ENCODE measurements at regions of chr16 and their contacts with region 1.

Region 1: DNA sequence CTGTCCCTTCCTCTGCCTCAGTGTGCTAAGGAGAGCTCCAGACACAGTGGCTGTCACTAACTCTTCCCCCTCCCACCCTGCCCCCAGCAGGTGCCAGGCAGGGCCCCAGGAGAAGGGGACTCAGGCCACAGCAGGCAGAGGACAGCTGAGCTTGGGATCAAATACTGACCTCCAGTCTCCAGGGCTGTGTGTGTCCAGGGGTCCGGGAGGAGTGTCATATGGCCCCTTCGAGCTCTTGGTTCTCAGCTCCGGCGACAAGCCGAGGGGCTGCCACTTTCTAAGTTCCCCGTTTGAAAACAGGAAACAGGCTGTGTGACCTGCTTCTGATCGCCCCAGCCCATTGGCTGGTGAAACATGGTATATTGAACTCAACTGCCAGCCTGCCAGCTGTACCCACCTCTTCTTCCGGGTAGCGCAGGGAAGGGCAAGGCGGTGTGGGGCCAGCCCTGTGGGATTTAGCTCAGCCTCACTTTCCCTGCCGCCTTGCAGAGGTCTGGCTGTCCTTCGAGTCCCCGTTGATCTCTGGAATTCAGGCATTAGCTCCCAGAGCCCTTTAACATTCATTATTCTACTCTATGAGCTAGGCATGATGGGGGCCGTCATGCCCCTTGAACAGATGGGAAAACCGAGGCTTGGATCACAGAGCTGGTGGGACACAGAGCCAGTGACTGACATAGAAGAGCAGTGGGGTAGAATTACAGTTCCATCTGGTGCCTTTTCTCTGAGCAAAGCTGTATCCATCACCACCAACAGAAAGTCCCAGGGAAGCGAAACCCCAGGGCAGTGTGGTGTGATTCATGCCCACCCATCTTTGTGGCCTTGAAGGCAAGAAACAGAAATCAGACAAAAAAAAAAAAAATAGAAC is at the start of gene SNX20:
- DNase-seq: peak; percentile 78
- H3K4me3 Mint-ChIP-seq: peak within 1 kb of the TSS; percentile 91
- H3K27ac Mint-ChIP-seq: peak within 1 kb of the TSS; percentile 86
- H3K4me1 Mint-ChIP-seq: peaks cover 91% of the 10 kb centered on the region
- H3K27me3 Mint-ChIP-seq: no peaks in the 10 kb centered on the region
- total RNA-seq, gene SNX20: 94.7 to 97.7 TPM

Region 2: GRCh38 chr16:50573947-50574744 is 107.1 kb before region 1 on chr16:
- CTCF ChIA-PET with region 1: no interaction called
- POLR2A ChIA-PET with region 1: no interaction called
- DNase-seq: no peak
- H3K4me3 Mint-ChIP-seq: no peak overlapping the region
- H3K27ac Mint-ChIP-seq: no peak overlapping the region
- H3K4me1 Mint-ChIP-seq: no peaks in the 10 kb centered on the region
- H3K27me3 Mint-ChIP-seq: no peaks in the 10 kb centered on the region

Region 3: DNA sequence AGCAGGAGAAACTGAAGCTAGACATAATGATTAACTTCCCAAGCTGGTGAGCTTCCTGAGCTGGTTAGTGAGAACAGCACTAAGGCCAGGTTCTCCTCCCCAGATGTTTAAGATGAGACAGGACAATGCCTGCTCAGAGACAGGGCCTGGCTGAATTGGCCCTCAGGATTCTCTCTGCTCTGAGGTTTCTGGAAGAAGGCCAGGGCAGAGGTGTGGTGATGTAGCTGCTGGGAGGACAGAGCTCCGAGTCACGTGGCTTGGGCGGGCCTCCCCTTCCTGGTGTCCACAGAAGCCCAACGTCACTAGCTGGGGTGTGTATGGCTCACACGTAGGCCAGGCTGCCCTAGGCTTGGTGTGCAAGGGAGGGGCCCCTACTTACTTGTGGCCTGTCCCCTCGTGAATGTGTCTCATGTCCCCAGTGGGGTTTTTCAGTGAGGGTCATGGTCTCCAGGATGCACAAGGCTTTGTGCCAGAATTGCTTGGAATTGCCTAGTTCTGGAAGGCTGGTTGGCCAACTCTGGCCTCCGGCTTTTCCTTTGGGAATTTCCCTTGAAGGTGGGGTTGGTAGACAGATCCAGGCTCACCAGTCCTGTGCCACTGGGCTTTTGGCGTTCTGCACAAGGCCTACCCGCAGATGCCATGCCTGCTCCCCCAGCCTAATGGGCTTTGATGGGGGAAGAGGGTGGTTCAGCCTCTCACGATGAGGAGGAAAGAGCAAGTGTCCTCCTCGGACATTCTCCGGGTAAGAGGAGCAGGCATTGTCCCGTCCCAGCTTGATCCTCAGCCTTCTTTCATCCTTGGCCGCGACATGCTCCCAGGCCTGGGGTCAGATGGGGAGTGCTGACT is 15.5 kb after region 1 on chr16:
- CTCF ChIA-PET with region 1: interaction called, 5 read pairs
- POLR2A ChIA-PET with region 1: interaction called, 164 read pairs
- DNase-seq: peak; percentile 84
- H3K4me3 Mint-ChIP-seq: peak overlapping the region; percentile 87
- H3K27ac Mint-ChIP-seq: peak overlapping the region; percentile 81
- H3K4me1 Mint-ChIP-seq: peaks cover 84% of the 10 kb centered on the region
- H3K27me3 Mint-ChIP-seq: peaks cover 3% of the 10 kb centered on the region

Region 4: GRCh38 chr16:50709053-50709684 is 27.9 kb after region 1 on chr16:
- CTCF ChIA-PET with region 1: interaction called, 3 read pairs
- POLR2A ChIA-PET with region 1: interaction called, 10 read pairs
- DNase-seq: no peak
- H3K4me3 Mint-ChIP-seq: peak overlapping the region; percentile 28
- H3K27ac Mint-ChIP-seq: peak overlapping the region; percentile 75
- H3K4me1 Mint-ChIP-seq: peaks cover 54% of the 10 kb centered on the region
- H3K27me3 Mint-ChIP-seq: no peaks in the 10 kb centered on the region

Region 5: GRCh38 chr16:50741808-50742575 is 60.7 kb after region 1 on chr16 and contains the start of gene CYLD:
- CTCF ChIA-PET with region 1: interaction called, 13 read pairs
- POLR2A ChIA-PET with region 1: interaction called, 118 read pairs
- DNase-seq: peak; percentile 100
- H3K4me3 Mint-ChIP-seq: peak within 1 kb of the TSS; percentile 94
- H3K27ac Mint-ChIP-seq: peak within 1 kb of the TSS; percentile 94
- H3K4me1 Mint-ChIP-seq: peaks cover 39% of the 10 kb centered on the region
- H3K27me3 Mint-ChIP-seq: no peaks in the 10 kb centered on the region
- total RNA-seq, gene CYLD: 235 to 254 TPM

Region 6: DNA sequence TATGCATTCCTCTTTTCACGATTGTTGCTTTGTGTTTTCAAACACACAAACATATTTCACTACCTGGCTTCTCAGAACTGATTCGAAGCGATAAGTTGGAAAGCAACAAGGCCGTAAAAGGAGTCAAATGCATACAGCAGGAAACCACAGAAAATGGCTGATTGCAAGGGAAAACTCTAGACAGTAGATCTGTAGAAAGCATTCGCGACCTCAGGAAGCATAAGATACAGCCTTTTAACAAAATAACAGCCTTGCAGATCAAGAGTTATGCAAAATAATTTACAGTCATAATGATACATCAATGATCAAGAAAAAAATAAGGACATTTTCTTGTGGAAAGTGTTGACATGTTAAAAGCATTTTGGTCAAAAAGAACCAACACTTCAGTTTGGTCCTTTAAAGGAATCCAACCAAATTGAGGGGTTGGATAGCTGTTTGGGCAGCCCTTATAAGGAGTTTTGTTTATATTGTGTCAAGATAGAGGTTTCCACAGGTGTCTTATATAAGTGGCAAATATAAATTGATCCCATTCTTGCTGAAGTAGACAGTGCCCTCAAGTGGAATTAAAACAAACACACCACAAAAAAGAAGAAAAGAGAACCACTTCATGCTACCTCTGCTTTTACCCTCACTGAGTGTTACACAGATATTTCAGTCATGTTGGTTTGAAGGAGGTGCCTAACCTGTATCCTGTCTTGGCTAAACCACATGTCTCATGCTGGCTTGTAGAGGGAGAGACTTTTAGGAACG is 66.1 kb after region 1 on chr16:
- CTCF ChIA-PET with region 1: interaction called, 13 read pairs
- POLR2A ChIA-PET with region 1: interaction called, 118 read pairs
- DNase-seq: peak; percentile 35
- H3K4me3 Mint-ChIP-seq: peak overlapping the region; percentile 75
- H3K27ac Mint-ChIP-seq: peak overlapping the region; percentile 97
- H3K4me1 Mint-ChIP-seq: peaks cover 60% of the 10 kb centered on the region
- H3K27me3 Mint-ChIP-seq: no peaks in the 10 kb centered on the region

Region 7: GRCh38 chr16:50841081-50841886 is 160.0 kb after region 1 on chr16:
- CTCF ChIA-PET with region 1: no interaction called
- POLR2A ChIA-PET with region 1: no interaction called
- DNase-seq: peak; percentile 27
- H3K4me3 Mint-ChIP-seq: peak overlapping the region; percentile 52
- H3K27ac Mint-ChIP-seq: no peak overlapping the region
- H3K4me1 Mint-ChIP-seq: peaks cover 25% of the 10 kb centered on the region
- H3K27me3 Mint-ChIP-seq: peaks cover 22% of the 10 kb centered on the region